ENCODE measurements at regions of chr2 and their contacts with region 1.

Region 1: GRCh38 chr2:223868005-223868404 is 30.6 kb upstream of the AP1S3 start:
- DNase-seq: no peak
- ATAC-seq: no peak
- H3K4me3 ChIP-seq: no peak overlapping the region
- H3K27ac ChIP-seq: no peak overlapping the region
- H3K4me1 ChIP-seq: peaks cover 0 to 10% (median 0%) of the 10 kb centered on the region in 9 donors
- H3K27me3 ChIP-seq: no peaks in the 10 kb centered on the region
- CTCF ChIP-seq: no peak

Region 2: DNA sequence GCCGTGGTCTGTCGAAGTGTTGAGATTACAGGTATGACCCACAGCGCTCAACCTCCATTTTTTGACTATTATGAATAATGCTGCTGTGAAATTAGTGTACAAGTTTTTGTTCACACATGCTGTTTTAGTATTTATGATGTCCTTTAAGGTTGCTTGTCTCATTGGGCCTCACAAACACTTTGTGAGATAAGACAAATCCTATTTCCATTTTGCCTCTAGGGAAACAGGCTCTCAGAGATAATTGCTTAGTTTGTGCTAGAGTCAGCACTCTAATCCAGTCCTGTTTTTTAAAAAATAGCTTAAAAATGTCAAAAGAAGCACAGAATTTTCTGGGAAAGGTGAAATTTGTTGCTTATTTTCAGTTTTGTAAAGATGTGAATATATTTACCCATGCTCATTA is 760.4 kb after region 1 on chr2:
- intact Hi-C with region 1: loop called in 1 of 10 experiments (anchors 5 kb)
- DNase-seq: no peak
- ATAC-seq: no peak
- H3K4me3 ChIP-seq: no peak overlapping the region
- H3K27ac ChIP-seq: no peak overlapping the region
- H3K4me1 ChIP-seq: no peaks in the 10 kb centered on the region
- H3K27me3 ChIP-seq: peaks cover 0 to 3% (median 0%) of the 10 kb centered on the region in 7 donors
- CTCF ChIP-seq: no peak